Right ventricle myocardium inferior (tissue), 1 donor: ENCODE measurements at regions of chr18 and their contacts with region 1.

Region 1: DNA sequence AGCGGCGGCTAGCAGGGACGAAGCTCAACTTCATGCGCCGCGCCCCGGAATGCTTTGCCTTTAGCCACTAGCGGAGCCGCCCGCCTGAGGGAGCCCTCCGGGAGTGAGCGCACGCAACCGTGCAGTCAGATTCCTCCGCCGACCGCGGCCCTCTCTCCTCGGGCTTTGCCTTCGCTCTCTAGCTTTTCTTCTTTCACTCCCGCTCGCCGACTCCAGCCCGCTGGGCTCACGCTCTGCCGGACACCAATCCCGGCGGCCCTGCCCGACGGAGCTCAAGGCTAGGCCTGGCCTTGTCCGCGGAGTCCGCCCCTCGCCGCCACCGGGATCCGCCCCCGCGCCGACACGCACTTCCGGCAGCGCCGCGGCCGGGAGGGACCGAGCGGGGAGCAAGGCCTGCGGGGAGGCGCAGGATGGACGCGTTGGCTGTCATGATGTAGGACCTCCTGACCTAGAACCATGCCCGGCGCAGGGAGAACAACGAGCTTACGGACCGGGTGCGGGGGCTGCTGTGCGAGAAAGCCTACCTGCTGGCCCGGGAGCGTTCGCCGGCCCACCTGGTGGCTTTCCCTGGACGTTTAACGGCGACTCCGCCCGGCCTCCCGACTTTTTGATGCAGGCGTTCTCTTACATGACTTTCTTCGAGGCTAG is 40.8 kb upstream of the AKAIN1 start:
- DNase-seq: peak; percentile 95
- ATAC-seq: peak; percentile 99

Region 2: DNA sequence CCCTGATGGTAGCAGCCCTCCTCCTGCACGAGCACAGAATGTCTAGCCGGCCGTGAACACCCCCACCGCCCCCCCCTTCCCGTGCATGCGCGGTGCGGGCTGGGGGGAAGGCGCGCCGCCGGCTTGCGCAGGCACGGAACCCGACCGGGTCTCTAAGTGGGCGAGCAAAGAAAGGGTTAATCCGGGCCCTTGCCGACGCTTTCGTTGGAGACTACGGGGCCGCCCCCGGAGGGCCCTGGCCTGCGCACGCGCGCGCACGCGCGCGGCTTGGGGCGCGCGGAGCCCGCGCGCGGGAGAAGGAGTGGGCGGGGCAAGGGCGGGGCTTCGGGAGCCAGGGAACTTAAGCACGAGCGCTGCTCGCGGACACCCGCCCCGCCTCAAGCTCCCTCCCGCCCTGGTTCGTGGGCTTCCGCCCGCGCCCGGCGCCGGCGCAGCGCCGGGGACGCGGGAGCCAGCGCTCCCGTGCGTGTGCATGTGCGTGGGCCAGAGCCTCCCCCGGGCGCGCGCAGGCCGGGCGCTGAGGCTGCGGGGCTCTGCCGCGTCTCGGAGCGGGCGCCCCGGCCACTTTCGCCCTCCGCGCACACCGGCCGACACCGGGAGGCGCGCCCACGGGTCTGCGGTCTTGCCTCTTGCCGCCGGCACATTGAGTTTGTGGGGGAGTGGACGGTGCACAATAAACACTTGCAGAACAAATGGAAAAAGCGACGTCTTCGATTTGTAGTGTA is 58.3 kb after region 1 on chr18:
- intact Hi-C with region 1: loop called (anchors 1 kb)
- DNase-seq: peak; percentile 98
- ATAC-seq: peak; percentile 94